T-cell (primary cell): ENCODE measurements at regions of chr9 and their contacts with region 1.

Region 1: GRCh38 chr9:105371691-105372090 is 76.1 kb upstream of the FSD1L start:
- DNase-seq: no peak
- ATAC-seq: no peak
- H3K4me3 ChIP-seq: no peak overlapping the region
- H3K4me3 Mint-ChIP-seq: no peak overlapping the region
- H3K27ac ChIP-seq: no peak overlapping the region
- H3K27ac Mint-ChIP-seq: no peak overlapping the region
- H3K4me1 ChIP-seq: no peaks in the 10 kb centered on the region
- H3K4me1 Mint-ChIP-seq: no peaks in the 10 kb centered on the region
- H3K27me3 ChIP-seq: no peaks in the 10 kb centered on the region
- H3K27me3 Mint-ChIP-seq: no peaks in the 10 kb centered on the region

Region 2: GRCh38 chr9:104875897-104876296 is 495.8 kb before region 1 on chr9:
- CTCF ChIA-PET with region 1: interaction called in 1 of 2 experiments, 11 read pairs
- POLR2A ChIA-PET with region 1: no interaction called
- DNase-seq: no peak
- ATAC-seq: no peak
- H3K4me3 ChIP-seq: no peak overlapping the region
- H3K4me3 Mint-ChIP-seq: no peak overlapping the region
- H3K27ac ChIP-seq: no peak overlapping the region
- H3K27ac Mint-ChIP-seq: no peak overlapping the region
- H3K4me1 ChIP-seq: no peaks in the 10 kb centered on the region
- H3K4me1 Mint-ChIP-seq: no peaks in the 10 kb centered on the region
- H3K27me3 ChIP-seq: no peaks in the 10 kb centered on the region
- H3K27me3 Mint-ChIP-seq: no peaks in the 10 kb centered on the region

Region 3: GRCh38 chr9:105608721-105609598 is 237.3 kb after region 1 on chr9:
- CTCF ChIA-PET with region 1: no interaction called
- POLR2A ChIA-PET with region 1: no interaction called
- DNase-seq: peak in 3 of 35 experiments; percentile 1 to 62 (median 2)
- ATAC-seq: peak in 1 of 4 experiments; percentile 43
- H3K4me3 ChIP-seq: no peak overlapping the region
- H3K4me3 Mint-ChIP-seq: no peak overlapping the region
- H3K27ac ChIP-seq: no peak overlapping the region
- H3K27ac Mint-ChIP-seq: no peak overlapping the region
- H3K4me1 ChIP-seq: no peaks in the 10 kb centered on the region
- H3K4me1 Mint-ChIP-seq: no peaks in the 10 kb centered on the region
- H3K27me3 ChIP-seq: no peaks in the 10 kb centered on the region
- H3K27me3 Mint-ChIP-seq: no peaks in the 10 kb centered on the region